ENCODE measurements at regions of chr17 and their contacts with region 1.

Region 1: GRCh38 chr17:36545465-36546417 is 1.0 kb downstream of the GGNBP2 start:
- DNase-seq: peak; percentile 95
- ATAC-seq: peak; percentile 81
- H3K4me3 Mint-ChIP-seq: peak overlapping the region; percentile 98
- H3K27ac Mint-ChIP-seq: peak overlapping the region; percentile 90
- H3K4me1 Mint-ChIP-seq: peaks cover 34% of the 10 kb centered on the region
- H3K27me3 Mint-ChIP-seq: no peaks in the 10 kb centered on the region

Region 2: DNA sequence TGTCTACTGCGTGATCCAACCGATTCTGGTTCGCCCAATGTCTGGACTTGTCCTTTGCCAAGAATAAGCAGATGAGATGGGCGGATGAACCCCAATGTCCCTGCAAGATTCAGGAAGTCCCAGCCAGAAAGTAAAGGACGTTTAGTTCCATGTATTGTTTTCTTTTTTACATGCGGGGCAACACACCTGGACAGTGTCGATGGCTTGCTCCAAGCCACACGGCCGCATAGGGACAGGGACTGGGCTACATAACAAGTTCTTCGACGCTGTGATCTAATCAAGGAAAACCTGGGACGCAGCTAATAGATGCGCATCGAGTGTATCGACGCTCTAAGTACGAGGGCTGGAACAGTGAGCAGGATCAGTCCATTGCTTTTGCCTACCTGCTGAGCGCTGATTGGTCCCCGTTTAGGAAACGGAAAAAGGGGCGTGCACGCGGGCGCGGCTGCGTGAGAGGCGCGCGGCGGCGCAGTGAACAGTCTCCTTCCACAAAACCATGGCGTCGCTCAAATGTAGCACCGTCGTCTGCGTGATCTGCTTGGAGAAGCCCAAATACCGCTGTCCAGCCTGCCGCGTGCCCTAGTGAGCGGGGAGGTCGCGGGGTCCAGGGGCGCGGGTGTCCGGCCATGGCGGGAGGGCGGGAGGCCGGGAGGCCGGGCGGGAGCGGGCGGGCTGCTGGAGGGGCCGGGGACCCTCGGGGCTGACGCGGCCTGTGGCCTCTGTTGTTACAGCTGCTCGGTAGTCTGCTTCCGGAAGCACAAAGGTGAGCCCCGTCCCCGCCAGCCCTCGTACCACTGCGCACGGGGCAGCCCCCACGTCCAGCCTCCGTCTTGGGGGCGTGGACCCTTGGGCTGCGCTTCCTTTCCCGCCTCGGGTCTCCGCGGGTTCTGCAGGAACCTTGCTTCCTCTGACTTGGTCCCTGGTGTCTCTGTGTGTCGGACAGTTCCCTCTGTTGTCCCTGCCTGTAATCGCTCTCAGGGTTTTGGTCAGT is 59.2 kb before region 1 on chr17 and contains the start of gene ZNHIT3:
- POLR2A ChIA-PET with region 1: interaction called, 12 read pairs
- DNase-seq: peak; percentile 89
- ATAC-seq: peak; percentile 94
- H3K4me3 Mint-ChIP-seq: peak within 1 kb of the TSS; percentile 93
- H3K27ac Mint-ChIP-seq: peak within 1 kb of the TSS; percentile 93
- H3K4me1 Mint-ChIP-seq: peaks cover 26% of the 10 kb centered on the region
- H3K27me3 Mint-ChIP-seq: peaks cover 10% of the 10 kb centered on the region
- total RNA-seq, gene ZNHIT3: 48.4 to 48.8 TPM

Region 3: DNA sequence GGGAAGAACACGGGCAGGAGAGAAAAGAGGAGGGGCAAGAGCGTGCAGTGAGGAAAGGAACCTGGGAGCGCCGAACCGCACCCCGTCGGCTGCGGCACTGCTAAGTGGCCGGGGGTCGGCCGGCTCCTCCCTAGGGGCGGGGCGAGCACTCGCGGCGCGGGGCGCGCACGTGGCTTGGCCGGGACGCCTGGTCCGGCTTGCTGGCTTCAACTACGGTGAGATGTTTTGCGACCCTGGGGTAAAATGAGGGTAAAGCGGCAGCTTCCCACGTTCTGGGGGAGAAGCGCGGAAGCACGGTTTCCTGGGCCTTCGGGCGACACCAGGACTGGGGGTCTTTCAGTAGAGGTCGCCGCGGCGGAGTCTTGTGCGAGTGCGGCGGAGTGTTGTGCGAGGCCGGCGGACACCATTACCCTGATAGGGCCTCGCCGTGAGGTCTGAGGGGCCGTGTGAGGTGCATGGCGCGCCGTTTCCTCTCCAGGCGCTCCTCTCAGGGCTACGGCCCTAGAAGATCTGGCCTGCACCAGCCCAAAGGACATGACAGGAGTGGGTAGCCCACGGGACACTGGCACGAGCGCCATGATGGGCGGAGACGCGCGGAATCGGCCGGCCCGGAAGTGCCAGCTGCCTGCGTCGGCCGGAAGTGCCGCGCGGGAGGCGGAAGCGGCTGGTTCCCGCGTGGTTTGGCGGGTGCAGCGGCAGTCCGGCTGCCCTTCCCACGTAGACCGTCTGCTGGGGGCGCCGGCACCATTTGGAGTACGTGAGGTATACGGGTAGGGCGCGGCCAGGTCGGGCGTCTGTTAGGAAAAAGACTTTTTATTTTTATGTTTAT is 10.7 kb before region 1 on chr17 and contains the starts of genes MYO19 and PIGW:
- POLR2A ChIA-PET with region 1: interaction called, 122 read pairs
- DNase-seq: peak; percentile 92
- ATAC-seq: peak; percentile 79
- H3K4me3 Mint-ChIP-seq: peak within 1 kb of the TSS; percentile 91
- H3K27ac Mint-ChIP-seq: peak within 1 kb of the TSS; percentile 96
- H3K4me1 Mint-ChIP-seq: peaks cover 30% of the 10 kb centered on the region
- H3K27me3 Mint-ChIP-seq: no peaks in the 10 kb centered on the region
- total RNA-seq, gene MYO19: 113 to 117 TPM
- total RNA-seq, gene PIGW: 8.6 to 11.1 TPM

Region 4: DNA sequence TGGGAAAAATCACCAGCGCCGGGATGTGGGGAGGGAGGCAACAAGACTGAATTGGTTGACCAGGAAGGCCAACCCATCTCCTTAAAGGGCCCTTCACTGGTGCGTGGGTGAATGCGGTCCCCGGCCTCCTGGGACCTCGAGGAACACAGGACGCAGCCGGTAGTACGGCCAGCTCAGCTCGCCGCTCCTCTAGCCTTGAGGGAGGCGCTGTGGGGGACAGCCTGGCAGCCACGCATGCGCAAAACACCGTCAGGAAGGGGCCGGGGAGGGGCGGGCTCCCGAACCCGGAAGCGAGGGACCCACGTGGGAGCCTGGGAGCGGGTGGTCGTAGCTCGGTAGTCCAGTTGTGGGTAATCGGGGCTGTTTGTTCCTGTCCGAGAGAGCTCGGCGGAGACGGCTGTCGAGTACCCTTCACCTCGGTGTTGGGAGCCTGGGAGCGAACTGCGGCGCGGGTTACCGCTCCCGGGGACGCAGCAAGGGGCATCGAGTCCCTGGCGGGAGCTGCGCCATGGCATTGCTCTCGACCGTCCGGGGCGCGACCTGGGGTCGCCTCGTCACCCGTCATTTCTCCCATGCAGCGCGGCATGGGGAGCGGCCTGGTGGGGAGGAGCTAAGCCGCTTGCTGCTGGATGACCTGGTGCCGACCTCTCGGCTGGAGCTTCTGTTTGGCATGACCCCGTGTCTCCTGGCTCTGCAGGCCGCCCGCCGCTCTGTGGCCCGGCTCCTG is 55.7 kb after region 1 on chr17 and contains the start of gene MRM1:
- POLR2A ChIA-PET with region 1: interaction called, 52 read pairs
- DNase-seq: peak; percentile 90
- ATAC-seq: peak; percentile 85
- H3K4me3 Mint-ChIP-seq: peak within 1 kb of the TSS; percentile 89
- H3K27ac Mint-ChIP-seq: peak within 1 kb of the TSS; percentile 96
- H3K4me1 Mint-ChIP-seq: peaks cover 29% of the 10 kb centered on the region
- H3K27me3 Mint-ChIP-seq: no peaks in the 10 kb centered on the region
- total RNA-seq, gene MRM1: 9.0 to 9.4 TPM